ENCODE measurements at regions of chr11 and their contacts with region 1.

Region 1: GRCh38 chr11:125874556-125875124 is 12.8 kb upstream of the HYLS1 start:
- DNase-seq: peak; percentile 59
- H3K4me3 Mint-ChIP-seq: no peak overlapping the region
- H3K27ac Mint-ChIP-seq: no peak overlapping the region
- H3K4me1 Mint-ChIP-seq: no peaks in the 10 kb centered on the region
- H3K27me3 Mint-ChIP-seq: peaks cover 32% of the 10 kb centered on the region
- CTCF ChIP-seq: peak; percentile 61

Region 2: DNA sequence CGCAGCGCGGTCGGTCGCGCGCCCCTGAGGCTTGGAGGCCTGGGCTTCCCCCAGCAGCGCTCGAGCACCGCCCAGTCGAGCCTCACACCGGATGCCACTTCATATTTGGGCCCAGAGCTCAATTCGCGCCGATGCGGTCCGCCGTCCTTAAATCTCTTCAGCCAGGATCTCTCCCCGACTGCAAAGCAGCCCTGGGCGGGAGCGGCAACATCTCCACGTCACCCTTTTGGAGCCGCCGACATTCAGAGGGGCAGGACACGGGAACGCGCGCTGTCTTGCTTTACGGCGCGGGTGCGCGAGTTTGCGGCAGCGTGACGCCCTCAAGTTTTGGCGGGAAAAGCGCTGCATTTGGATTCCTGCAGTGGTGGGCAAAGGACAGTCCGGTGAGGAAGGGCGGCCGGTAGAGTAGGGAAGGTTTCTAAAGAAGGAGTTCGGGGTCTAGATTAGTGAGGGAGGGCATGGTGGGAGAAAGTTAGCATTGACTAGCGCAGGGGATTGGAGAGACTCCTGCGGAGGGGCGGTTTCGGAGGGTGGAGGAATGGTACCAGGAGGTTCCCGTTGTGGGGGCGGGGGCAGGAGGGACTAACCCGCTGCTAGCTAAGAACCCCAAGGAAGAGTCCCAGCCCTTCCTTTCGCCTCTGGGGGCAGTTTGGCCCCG is 248.9 kb before region 1 on chr11:
- CTCF ChIA-PET with region 1: no interaction called
- intact Hi-C with region 1: loop called (anchors 5 kb)
- DNase-seq: peak; percentile 80
- H3K4me3 Mint-ChIP-seq: peak overlapping the region; percentile 81
- H3K27ac Mint-ChIP-seq: peak overlapping the region; percentile 78
- H3K4me1 Mint-ChIP-seq: peaks cover 17% of the 10 kb centered on the region
- H3K27me3 Mint-ChIP-seq: no peaks in the 10 kb centered on the region
- CTCF ChIP-seq: no peak

Region 3: GRCh38 chr11:125724125-125724524 is 150.5 kb before region 1 on chr11:
- CTCF ChIA-PET with region 1: no interaction called
- intact Hi-C with region 1: loop called (anchors 1 kb)
- DNase-seq: no peak
- H3K4me3 Mint-ChIP-seq: no peak overlapping the region
- H3K27ac Mint-ChIP-seq: no peak overlapping the region
- H3K4me1 Mint-ChIP-seq: no peaks in the 10 kb centered on the region
- H3K27me3 Mint-ChIP-seq: peaks cover 50% of the 10 kb centered on the region
- CTCF ChIP-seq: no peak

Measured in Calu3 (cell line).